A673 (cell line): ENCODE measurements at regions of chr7 and their contacts with region 1.

Region 1: DNA sequence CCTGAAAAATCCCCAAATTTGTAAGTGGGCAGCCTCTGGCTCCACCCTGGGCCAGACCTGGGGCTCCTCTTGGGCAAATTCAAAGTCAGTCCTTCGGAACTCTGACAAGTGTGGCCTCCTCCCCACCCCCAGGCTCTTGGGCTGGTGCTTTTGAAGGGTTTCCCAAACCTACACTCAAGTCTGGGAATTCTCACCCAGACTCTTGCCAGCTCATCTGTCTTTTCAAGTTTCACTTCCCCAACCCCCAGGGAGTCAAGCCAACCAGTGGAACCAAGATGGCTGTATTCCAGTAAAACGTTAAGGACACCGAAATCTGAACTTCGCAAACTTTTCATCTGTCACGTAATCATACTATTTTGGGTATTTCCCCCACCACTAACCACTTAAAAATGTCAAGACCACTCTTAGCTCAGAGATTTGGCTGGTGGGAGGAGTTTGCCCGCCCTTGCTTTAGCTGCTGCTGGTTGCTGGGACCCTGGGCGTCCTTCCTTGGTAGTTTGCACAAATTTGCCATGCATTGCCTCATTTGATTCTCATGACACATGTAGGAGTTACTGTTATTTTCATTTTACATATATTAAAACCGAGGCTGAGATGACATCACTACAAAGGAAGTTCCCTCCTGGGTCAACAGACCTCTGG is 1.7 kb upstream of the MYO1G start:
- DNase-seq: peak; percentile 69
- H3K4me3 ChIP-seq: no peak overlapping the region
- H3K27ac ChIP-seq: peak overlapping the region; percentile 80
- H3K4me1 ChIP-seq: peaks cover 42% of the 10 kb centered on the region
- H3K27me3 ChIP-seq: no peaks in the 10 kb centered on the region
- CTCF ChIP-seq: no peak

Region 2: GRCh38 chr7:44885394-44886317 is 94.9 kb before region 1 on chr7 and contains the start of gene PURB:
- CTCF ChIA-PET with region 1: no interaction called
- POLR2A ChIA-PET with region 1: interaction called, 9 read pairs
- intact Hi-C with region 1: loop called (anchors 5 kb)
- DNase-seq: peak; percentile 96
- H3K4me3 ChIP-seq: peak within 1 kb of the TSS; percentile 74
- H3K27ac ChIP-seq: peak within 1 kb of the TSS; percentile 98
- H3K4me1 ChIP-seq: peaks cover 36% of the 10 kb centered on the region
- H3K27me3 ChIP-seq: no peaks in the 10 kb centered on the region
- CTCF ChIP-seq: no peak
- total RNA-seq, gene PURB: 25.3 and 27.4 TPM in 2 replicates